Activated CD4-positive, alpha-beta T cell treated with anti-CD3 and anti-CD28 coated beads, Interleukin-2, amount 10 ng/mL, durations not matched to agents 24 days and 14 days (primary cell): ENCODE measurements at regions of chr3 and their contacts with region 1.

Region 1: DNA sequence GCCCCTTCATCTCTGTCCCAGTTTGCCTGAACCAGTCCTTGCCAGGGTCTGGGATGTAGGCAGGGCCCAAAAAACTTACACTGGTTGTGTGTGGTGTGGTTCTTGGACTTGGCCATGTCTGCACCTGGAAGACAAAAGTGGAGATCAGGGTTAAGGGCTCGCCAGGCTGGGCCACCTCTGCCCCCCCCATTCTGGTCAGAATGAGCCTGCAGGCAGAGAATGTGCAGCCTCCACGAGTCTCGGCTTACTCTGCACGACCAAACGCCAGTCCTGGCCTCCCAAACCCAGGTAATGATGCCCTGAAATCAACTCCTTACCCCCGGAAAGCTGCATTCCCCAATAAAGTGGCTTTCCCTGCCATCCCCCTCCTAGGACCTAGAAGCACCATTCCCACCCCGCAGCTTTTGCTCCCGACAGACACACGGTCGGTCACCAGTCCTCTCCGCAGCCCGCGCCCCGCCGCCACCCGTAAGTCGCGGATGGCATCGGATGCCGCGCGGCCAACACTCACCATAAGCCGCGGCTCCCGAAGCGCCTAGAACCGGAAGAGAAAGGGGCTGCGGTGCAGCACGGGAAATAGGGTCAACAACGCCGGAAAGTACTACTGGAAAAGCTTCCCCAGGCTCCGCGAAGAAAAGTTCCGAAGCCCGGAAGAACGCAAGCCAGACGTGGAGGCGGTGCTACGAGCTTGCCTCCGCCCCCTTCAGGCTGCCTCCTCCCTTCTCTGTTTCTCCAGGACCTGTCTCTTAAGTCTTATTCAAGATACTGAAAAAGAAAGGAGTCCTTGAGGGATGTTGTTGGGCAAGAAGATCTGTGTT is at the start of gene RPL29:
- DNase-seq: peak; percentile 98
- H3K4me3 Mint-ChIP-seq: peak within 1 kb of the TSS; percentile 90
- H3K27ac Mint-ChIP-seq: peak within 1 kb of the TSS; percentile 97
- H3K4me1 Mint-ChIP-seq: peaks cover 20% of the 10 kb centered on the region
- H3K27me3 Mint-ChIP-seq: peaks cover 16% of the 10 kb centered on the region
- total RNA-seq, gene RPL29: 1,714 and 1,721 TPM in 2 replicates

Region 2: DNA sequence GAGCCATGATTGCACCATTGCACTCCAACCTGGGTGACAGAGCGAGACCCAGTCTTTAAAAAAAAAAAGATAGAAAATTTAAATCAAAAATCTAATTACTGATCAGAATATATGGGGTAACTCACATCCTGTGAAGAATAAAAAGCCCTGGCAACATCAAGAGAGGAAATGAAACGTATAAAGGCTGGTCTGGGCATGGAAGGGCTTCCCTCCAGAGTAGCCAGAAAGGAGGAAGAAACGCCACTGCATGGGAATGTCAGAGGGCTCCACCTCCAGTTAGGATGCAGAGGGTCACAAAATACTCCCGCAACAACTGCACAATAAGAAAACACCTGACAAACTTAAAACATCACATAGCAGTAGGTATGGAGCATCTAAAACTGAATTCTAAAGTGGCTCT is 87.5 kb before region 1 on chr3:
- intact Hi-C with region 1: no loop called
- DNase-seq: no peak
- H3K4me3 Mint-ChIP-seq: no peak overlapping the region
- H3K27ac Mint-ChIP-seq: no peak overlapping the region
- H3K4me1 Mint-ChIP-seq: no peaks in the 10 kb centered on the region
- H3K27me3 Mint-ChIP-seq: no peaks in the 10 kb centered on the region

Region 3: DNA sequence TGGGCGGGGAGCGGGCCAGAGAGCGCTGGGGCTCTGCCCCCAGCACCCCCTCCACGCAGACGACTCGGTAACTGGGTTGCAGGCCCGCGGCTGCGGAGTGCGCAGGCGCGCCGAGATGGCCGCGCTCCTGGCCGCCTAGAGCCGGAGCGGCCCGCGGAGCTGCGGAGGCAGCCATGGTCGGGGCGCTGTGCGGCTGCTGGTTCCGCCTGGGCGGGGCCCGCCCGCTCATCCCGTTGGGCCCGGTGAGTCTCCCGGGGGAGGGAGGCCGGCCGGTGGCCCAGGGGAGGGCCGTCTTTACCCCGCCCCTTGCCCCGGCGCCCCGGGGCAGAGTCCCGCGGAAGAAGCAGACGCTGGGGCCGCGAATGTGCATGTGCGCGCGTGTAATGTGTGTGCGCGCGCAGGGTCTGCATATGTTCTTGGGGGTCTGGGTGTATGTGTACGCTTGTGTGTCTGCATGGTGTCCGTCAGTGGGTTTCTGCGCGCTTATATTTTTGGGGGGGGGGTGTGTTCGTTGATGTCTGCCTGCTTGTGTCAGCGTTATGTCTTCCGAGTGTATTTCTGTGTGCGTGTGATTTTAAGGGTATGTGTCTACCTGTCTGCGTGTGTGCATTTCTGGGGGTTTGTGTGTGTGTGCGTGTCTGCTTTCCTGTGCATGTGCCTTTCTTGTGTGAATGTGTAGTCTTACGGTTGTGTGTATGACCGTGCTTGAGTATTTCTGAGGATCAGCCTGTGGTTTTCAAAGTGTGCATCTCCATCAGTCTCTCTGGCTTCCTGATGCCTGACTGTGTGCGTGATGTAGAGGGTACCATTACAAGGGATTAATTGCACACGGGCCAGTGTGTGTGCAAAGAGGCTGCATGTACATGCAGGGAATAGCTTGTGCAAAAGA is 20.3 kb before region 1 on chr3 and contains the start of gene ABHD14A:
- intact Hi-C with region 1: loop called (anchors 2 kb)
- DNase-seq: peak; percentile 94
- H3K4me3 Mint-ChIP-seq: peak within 1 kb of the TSS; percentile 87
- H3K27ac Mint-ChIP-seq: peak within 1 kb of the TSS; percentile 96
- H3K4me1 Mint-ChIP-seq: peaks cover 17% of the 10 kb centered on the region
- H3K27me3 Mint-ChIP-seq: no peaks in the 10 kb centered on the region
- total RNA-seq, gene ABHD14A: 12.3 and 13.8 TPM in 2 replicates

Region 4: GRCh38 chr3:51982782-51983577 is 12.6 kb before region 1 on chr3 and contains the start of gene ACY1:
- intact Hi-C with region 1: loop called (anchors 1 kb)
- DNase-seq: peak; percentile 95
- H3K4me3 Mint-ChIP-seq: peak within 1 kb of the TSS; percentile 96
- H3K27ac Mint-ChIP-seq: peak within 1 kb of the TSS; percentile 96
- H3K4me1 Mint-ChIP-seq: peaks cover 20% of the 10 kb centered on the region
- H3K27me3 Mint-ChIP-seq: no peaks in the 10 kb centered on the region
- total RNA-seq, gene ACY1: 57.9 and 58.7 TPM in 2 replicates

Region 5: GRCh38 chr3:52154117-52155094 is 158.9 kb after region 1 on chr3 and contains the start of gene POC1A:
- intact Hi-C with region 1: loop called (anchors 1 kb)
- DNase-seq: peak; percentile 97
- H3K4me3 Mint-ChIP-seq: peak within 1 kb of the TSS; percentile 92
- H3K27ac Mint-ChIP-seq: peak within 1 kb of the TSS; percentile 97
- H3K4me1 Mint-ChIP-seq: peaks cover 20% of the 10 kb centered on the region
- H3K27me3 Mint-ChIP-seq: no peaks in the 10 kb centered on the region
- total RNA-seq, gene POC1A: 23.2 and 24.1 TPM in 2 replicates

Region 6: GRCh38 chr3:52197842-52198668 is 202.5 kb after region 1 on chr3 and contains the start of gene ALAS1:
- intact Hi-C with region 1: loop called (anchors 5 kb)
- DNase-seq: peak; percentile 99
- H3K4me3 Mint-ChIP-seq: peak within 1 kb of the TSS; percentile 100
- H3K27ac Mint-ChIP-seq: peak within 1 kb of the TSS; percentile 89
- H3K4me1 Mint-ChIP-seq: peaks cover 52% of the 10 kb centered on the region
- H3K27me3 Mint-ChIP-seq: no peaks in the 10 kb centered on the region
- total RNA-seq, gene ALAS1: 115 and 118 TPM in 2 replicates